ENCODE measurements at regions of chr18 and their contacts with region 1.

Region 1: GRCh38 chr18:32576296-32576916 is 105.7 kb upstream of the GAREM1 start:
- DNase-seq: no peak
- H3K4me3 ChIP-seq: no peak overlapping the region
- H3K27ac ChIP-seq: no peak overlapping the region
- H3K4me1 ChIP-seq: peaks cover 0 to 4% (median 0%) of the 10 kb centered on the region in 4 experiments; a peak in 1 of 7 replicates
- H3K27me3 ChIP-seq: no peaks in the 10 kb centered on the region
- CTCF ChIP-seq: peak; percentile 34 to 57 (median 52)
- EP300 ChIP-seq: no peak
- POLR2A ChIP-seq: no peak
- RAD21 ChIP-seq: peak; percentile 48 to 67; a peak in 3 of 4 replicates

Region 2: GRCh38 chr18:32595832-32596231 is 19.4 kb after region 1 on chr18:
- CTCF ChIA-PET with region 1: interaction called, 13 read pairs
- POLR2A ChIA-PET with region 1: no interaction called
- DNase-seq: no peak
- H3K4me3 ChIP-seq: no peak overlapping the region
- H3K27ac ChIP-seq: no peak overlapping the region
- H3K4me1 ChIP-seq: peaks cover 0 to 3% (median 0%) of the 10 kb centered on the region in 4 experiments; a peak in 2 of 7 replicates
- H3K27me3 ChIP-seq: no peaks in the 10 kb centered on the region
- CTCF ChIP-seq: no peak
- EP300 ChIP-seq: no peak
- POLR2A ChIP-seq: no peak
- RAD21 ChIP-seq: no peak

Measured in H1 (cell line).